ENCODE measurements at regions of chr1 and their contacts with region 1.

Region 1: GRCh38 chr1:22952694-22953391 is 19.8 kb downstream of the LACTBL1 start:
- DNase-seq: no peak
- H3K4me3 ChIP-seq: peak overlapping the region in 1 of 4 experiments; percentile 28; a peak in 1 of 8 replicates
- H3K27ac ChIP-seq: no peak overlapping the region
- H3K4me1 ChIP-seq: no peaks in the 10 kb centered on the region
- H3K27me3 ChIP-seq: peaks cover 0 to 15% (median 6%) of the 10 kb centered on the region in 4 experiments; a peak in 4 of 7 replicates
- CTCF ChIP-seq: no peak
- EP300 ChIP-seq: no peak
- POLR2A ChIP-seq: no peak
- RAD21 ChIP-seq: no peak

Region 2: GRCh38 chr1:22611530-22611947 is 341.3 kb before region 1 on chr1:
- CTCF ChIA-PET with region 1: no interaction called
- POLR2A ChIA-PET with region 1: no interaction called
- DNase-seq: peak; percentile 54 to 92
- H3K4me3 ChIP-seq: no peak overlapping the region
- H3K27ac ChIP-seq: no peak overlapping the region
- H3K4me1 ChIP-seq: peaks cover 0 to 6% (median 3%) of the 10 kb centered on the region in 4 experiments; a peak in 6 of 7 replicates
- H3K27me3 ChIP-seq: no peaks in the 10 kb centered on the region; a peak in 2 of 7 replicates
- CTCF ChIP-seq: no peak
- EP300 ChIP-seq: no peak
- POLR2A ChIP-seq: no peak
- RAD21 ChIP-seq: no peak; a peak in 1 of 4 replicates

Region 3: DNA sequence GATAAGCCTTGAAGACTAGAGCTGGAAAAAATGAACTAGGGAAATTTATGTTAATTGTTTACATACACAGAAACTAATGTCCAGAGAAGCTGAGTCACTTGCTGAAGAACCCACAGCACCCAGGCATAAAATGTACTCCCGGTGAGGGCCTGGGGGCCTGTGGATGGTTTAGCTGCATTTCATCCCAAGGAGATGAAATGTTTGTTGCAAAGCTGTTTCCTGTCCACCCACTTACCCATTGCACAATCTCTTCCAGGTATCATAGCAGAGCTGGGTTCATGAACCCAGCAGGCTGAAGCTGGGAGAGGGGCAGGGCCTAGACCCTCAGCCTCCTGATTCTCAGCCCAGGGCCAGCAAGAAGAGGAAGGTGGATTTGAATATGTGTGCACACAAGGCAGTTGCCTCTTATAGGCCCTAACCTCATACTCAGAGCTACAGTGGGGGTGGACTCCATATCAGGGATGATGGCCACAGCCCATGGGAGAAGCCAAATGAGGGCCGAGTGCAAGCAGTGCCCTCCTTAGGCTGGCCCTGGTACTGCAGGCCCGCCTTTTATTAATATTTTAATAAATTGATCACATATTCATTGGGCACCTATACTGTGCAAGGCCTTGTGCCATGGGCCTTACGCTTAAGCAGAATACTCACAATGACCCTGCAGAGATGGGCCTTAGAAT is 90.9 kb before region 1 on chr1:
- CTCF ChIA-PET with region 1: no interaction called
- POLR2A ChIA-PET with region 1: no interaction called
- DNase-seq: peak in 1 of 2 experiments; percentile 78
- H3K4me3 ChIP-seq: no peak overlapping the region
- H3K27ac ChIP-seq: no peak overlapping the region
- H3K4me1 ChIP-seq: peaks cover 0 to 3% (median 0%) of the 10 kb centered on the region in 4 experiments; a peak in 3 of 7 replicates
- H3K27me3 ChIP-seq: no peaks in the 10 kb centered on the region; a peak in 1 of 7 replicates
- CTCF ChIP-seq: peak; percentile 71 to 80 (median 80)
- EP300 ChIP-seq: no peak
- POLR2A ChIP-seq: no peak
- RAD21 ChIP-seq: peak; percentile 79 to 88

Region 4: DNA sequence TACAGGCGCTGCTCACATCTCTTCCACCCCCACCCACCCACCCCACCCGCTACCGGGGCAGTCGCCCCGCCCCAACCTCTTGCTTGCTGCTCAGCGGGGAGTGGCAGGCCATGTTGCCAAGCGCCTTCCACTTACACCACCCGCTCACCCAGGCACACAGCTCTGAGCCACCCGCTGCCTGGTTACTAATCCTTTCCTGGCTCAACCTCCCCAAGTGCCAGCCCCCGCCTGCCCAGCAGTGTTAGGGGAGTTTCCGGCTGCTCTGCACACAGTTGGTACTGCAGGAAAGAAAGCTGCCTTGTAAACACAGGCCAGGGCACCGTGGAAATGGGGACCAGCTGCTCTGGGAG is 36.4 kb before region 1 on chr1:
- CTCF ChIA-PET with region 1: no interaction called
- POLR2A ChIA-PET with region 1: no interaction called
- DNase-seq: no peak
- H3K4me3 ChIP-seq: no peak overlapping the region
- H3K27ac ChIP-seq: no peak overlapping the region
- H3K4me1 ChIP-seq: peaks cover 0 to 3% (median 0%) of the 10 kb centered on the region in 4 experiments; a peak in 2 of 7 replicates
- H3K27me3 ChIP-seq: no peaks in the 10 kb centered on the region
- CTCF ChIP-seq: no peak
- EP300 ChIP-seq: no peak
- POLR2A ChIP-seq: no peak
- RAD21 ChIP-seq: no peak

Region 5: GRCh38 chr1:22963044-22963677 is 10.3 kb after region 1 on chr1:
- CTCF ChIA-PET with region 1: interaction called, 21 read pairs
- POLR2A ChIA-PET with region 1: interaction called, 4 read pairs
- DNase-seq: no peak
- H3K4me3 ChIP-seq: no peak overlapping the region
- H3K27ac ChIP-seq: no peak overlapping the region
- H3K4me1 ChIP-seq: no peaks in the 10 kb centered on the region
- H3K27me3 ChIP-seq: peaks cover 0 to 2% (median 0%) of the 10 kb centered on the region in 4 experiments; a peak in 2 of 7 replicates
- CTCF ChIP-seq: no peak
- EP300 ChIP-seq: no peak
- POLR2A ChIP-seq: no peak
- RAD21 ChIP-seq: no peak

Measured in H1 (cell line).